Psoas muscle (tissue), 8 donors: ENCODE measurements at regions of chr20 and their contacts with region 1.

Region 1: DNA sequence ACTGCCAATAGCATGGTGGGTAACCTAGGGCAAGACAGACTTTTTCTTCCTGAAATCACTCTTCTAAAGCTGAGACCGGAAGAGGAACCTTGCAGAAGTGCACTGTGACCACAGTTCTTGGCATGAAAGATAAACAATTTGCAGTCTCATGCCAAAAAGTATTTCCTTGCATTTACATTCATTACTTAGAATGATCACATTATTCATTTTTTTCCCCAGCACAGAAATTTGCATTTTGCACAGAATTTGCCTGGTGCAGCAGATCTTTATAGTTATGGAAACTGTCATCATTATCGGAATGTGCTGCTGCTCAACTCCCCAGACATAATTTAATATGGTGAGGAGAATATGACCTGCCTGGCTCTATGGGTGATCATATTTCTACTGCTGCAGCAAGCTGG is 42.2 kb upstream of the EDN3 start:
- DNase-seq: no peak
- ATAC-seq: no peak
- H3K4me3 ChIP-seq: no peak overlapping the region
- H3K27ac ChIP-seq: no peak overlapping the region
- H3K4me1 ChIP-seq: no peaks in the 10 kb centered on the region
- H3K27me3 ChIP-seq: peaks cover 4 to 23% (median 5%) of the 10 kb centered on the region in 3 donors
- CTCF ChIP-seq: no peak

Region 2: DNA sequence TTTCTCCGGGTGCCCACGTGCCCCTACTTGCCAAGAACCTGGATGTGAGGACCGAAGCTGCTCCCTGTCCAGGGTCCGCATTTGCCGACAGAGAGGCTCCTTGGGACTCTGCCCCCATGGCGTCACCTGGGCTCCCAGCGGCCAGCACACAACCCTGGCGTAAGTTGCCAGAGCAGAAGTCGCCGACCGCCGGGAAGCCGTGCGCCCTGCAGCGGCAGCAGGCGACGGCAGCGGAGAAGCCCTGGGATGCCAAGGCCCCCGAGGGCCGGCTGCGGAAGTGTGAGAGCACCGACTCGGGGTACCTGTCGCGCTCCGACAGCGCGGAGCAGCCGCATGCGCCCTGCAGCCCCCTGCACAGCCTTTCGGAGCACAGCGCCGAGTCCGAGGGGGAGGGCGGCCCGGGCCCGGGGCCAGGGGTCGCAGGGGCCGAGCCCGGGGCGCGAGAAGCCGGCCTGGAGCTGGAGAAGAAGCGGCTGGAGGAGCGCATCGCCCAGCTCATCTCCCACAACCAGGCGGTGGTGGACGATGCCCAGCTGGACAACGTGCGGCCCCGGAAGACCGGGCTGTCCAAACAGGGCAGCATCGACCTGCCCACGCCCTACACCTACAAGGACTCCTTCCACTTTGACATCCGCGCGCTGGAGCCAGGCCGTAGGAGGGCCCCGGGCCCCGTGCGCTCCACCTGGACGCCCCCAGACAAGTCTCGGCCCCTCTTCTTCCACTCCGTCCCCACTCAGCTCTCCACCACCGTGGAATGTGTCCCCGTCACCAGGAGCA is 66.3 kb before region 1 on chr20:
- intact Hi-C with region 1: no loop called
- DNase-seq: no peak
- ATAC-seq: no peak
- H3K4me3 ChIP-seq: no peak overlapping the region
- H3K27ac ChIP-seq: no peak overlapping the region
- H3K4me1 ChIP-seq: no peaks in the 10 kb centered on the region
- H3K27me3 ChIP-seq: peaks cover 0 to 11% (median 9%) of the 10 kb centered on the region in 3 donors
- CTCF ChIP-seq: no peak

Region 3: GRCh38 chr20:59474619-59475018 is 216.4 kb after region 1 on chr20:
- intact Hi-C with region 1: loop called in 1 of 2 experiments (anchors 5 kb)
- DNase-seq: no peak
- ATAC-seq: no peak
- H3K4me3 ChIP-seq: no peak overlapping the region
- H3K27ac ChIP-seq: no peak overlapping the region
- H3K4me1 ChIP-seq: no peaks in the 10 kb centered on the region
- H3K27me3 ChIP-seq: no peaks in the 10 kb centered on the region
- CTCF ChIP-seq: no peak

Region 4: DNA sequence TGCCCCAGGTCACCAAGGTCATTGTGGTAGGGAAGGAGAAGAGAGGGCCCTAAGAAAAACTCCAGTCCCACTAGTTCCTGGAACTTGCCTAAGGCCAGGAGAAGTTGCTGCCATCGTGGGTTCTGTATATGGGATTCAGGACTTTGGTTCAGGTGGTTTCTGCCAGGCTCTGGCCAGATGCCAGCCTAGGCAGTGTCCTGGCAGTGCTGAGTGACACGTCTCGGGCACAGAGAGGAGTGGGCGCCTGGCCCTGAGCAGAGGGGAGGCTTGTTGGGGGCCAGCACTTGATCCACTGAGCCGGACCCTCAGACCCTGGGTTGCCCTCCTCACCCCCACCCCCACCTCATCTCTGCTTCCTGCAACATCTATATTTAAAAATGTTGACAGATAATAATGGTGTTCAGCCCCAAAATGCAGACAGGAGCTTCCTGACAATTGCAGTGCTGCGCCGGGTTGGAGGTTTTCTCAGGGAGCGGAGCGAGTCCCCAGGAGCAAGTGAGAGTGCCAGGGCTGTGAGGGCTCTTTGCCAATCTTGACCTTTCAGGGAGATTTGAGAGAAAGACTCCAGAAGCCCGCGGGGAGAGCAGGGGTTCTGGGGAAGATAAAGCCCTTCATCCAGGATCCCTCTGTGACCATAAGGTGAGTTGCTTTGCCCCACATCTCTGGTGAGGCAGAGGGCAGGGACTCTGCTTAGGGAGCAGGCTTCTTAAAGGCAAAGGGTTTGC is 418.1 kb after region 1 on chr20:
- intact Hi-C with region 1: no loop called
- DNase-seq: no peak
- ATAC-seq: no peak
- H3K4me3 ChIP-seq: no peak overlapping the region
- H3K27ac ChIP-seq: no peak overlapping the region
- H3K4me1 ChIP-seq: no peaks in the 10 kb centered on the region
- H3K27me3 ChIP-seq: peaks cover 0 to 6% (median 4%) of the 10 kb centered on the region in 3 donors
- CTCF ChIP-seq: no peak